ENCODE measurements at regions of chr10 and their contacts with region 1.

Region 1: GRCh38 chr10:68156373-68157185 is 47.3 kb downstream of the MYPN start:
- DNase-seq: peak; percentile 62 to 78
- H3K4me3 ChIP-seq: no peak overlapping the region
- H3K4me3 Mint-ChIP-seq: no peak overlapping the region
- H3K27ac Mint-ChIP-seq: no peak overlapping the region
- H3K4me1 ChIP-seq: peaks cover 10% of the 10 kb centered on the region
- H3K4me1 Mint-ChIP-seq: peaks cover 9% of the 10 kb centered on the region
- H3K27me3 ChIP-seq: no peaks in the 10 kb centered on the region
- H3K27me3 Mint-ChIP-seq: no peaks in the 10 kb centered on the region
- CTCF ChIP-seq: peak; percentile 91 to 94

Region 2: GRCh38 chr10:68074775-68075549 is 81.6 kb before region 1 on chr10 and contains the start of gene HERC4:
- CTCF ChIA-PET with region 1: interaction called, 5 read pairs
- POLR2A ChIA-PET with region 1: no interaction called
- intact Hi-C with region 1: loop called (anchors 2 kb)
- DNase-seq: peak; percentile 98
- H3K4me3 ChIP-seq: peak within 1 kb of the TSS; percentile 91
- H3K4me3 Mint-ChIP-seq: peak within 1 kb of the TSS; percentile 97
- H3K27ac Mint-ChIP-seq: peak within 1 kb of the TSS; percentile 94
- H3K4me1 ChIP-seq: peaks cover 18% of the 10 kb centered on the region
- H3K4me1 Mint-ChIP-seq: peaks cover 18% of the 10 kb centered on the region
- H3K27me3 ChIP-seq: no peaks in the 10 kb centered on the region
- H3K27me3 Mint-ChIP-seq: no peaks in the 10 kb centered on the region
- CTCF ChIP-seq: no peak
- total RNA-seq, gene HERC4: 59.4 and 65.2 TPM in 2 replicates

Region 3: GRCh38 chr10:68082872-68083271 is 73.7 kb before region 1 on chr10:
- CTCF ChIA-PET with region 1: interaction called, 20 read pairs
- POLR2A ChIA-PET with region 1: no interaction called
- intact Hi-C with region 1: loop called (anchors 1 kb)
- DNase-seq: peak in 1 of 2 experiments; percentile 26
- H3K4me3 ChIP-seq: no peak overlapping the region
- H3K4me3 Mint-ChIP-seq: no peak overlapping the region
- H3K27ac Mint-ChIP-seq: no peak overlapping the region
- H3K4me1 ChIP-seq: peaks cover 15% of the 10 kb centered on the region
- H3K4me1 Mint-ChIP-seq: peaks cover 19% of the 10 kb centered on the region
- H3K27me3 ChIP-seq: no peaks in the 10 kb centered on the region
- H3K27me3 Mint-ChIP-seq: peaks cover 3% of the 10 kb centered on the region
- CTCF ChIP-seq: peak; percentile 45 to 54

Region 4: DNA sequence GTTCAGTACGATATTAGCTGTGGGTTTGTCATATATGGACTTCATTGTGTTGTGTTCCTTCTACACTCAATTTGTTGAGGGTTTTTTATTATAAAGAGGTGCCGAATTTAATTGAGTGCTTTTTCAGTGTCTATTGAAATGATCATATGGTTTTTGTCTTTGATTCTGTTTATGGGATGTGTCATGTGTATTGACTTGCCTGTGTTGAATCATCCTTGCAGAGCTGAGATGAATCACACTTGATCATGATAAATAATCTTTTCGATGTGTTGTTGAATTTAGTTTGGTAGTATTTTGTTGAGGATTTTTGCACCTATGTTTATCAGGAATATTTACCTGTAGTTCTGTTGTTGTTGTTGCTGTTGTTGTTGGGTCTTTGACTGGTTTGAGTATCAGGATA is 35.5 kb after region 1 on chr10:
- CTCF ChIA-PET with region 1: no interaction called
- POLR2A ChIA-PET with region 1: no interaction called
- intact Hi-C with region 1: no loop called
- DNase-seq: no peak
- H3K4me3 ChIP-seq: no peak overlapping the region
- H3K4me3 Mint-ChIP-seq: no peak overlapping the region
- H3K27ac Mint-ChIP-seq: no peak overlapping the region
- H3K4me1 ChIP-seq: no peaks in the 10 kb centered on the region
- H3K4me1 Mint-ChIP-seq: no peaks in the 10 kb centered on the region
- H3K27me3 ChIP-seq: no peaks in the 10 kb centered on the region
- H3K27me3 Mint-ChIP-seq: peaks cover 32% of the 10 kb centered on the region
- CTCF ChIP-seq: no peak

Region 5: GRCh38 chr10:68271196-68271882 is 114.8 kb after region 1 on chr10:
- CTCF ChIA-PET with region 1: no interaction called
- POLR2A ChIA-PET with region 1: no interaction called
- intact Hi-C with region 1: no loop called
- DNase-seq: peak in 1 of 2 experiments; percentile 27
- H3K4me3 ChIP-seq: no peak overlapping the region
- H3K4me3 Mint-ChIP-seq: no peak overlapping the region
- H3K27ac Mint-ChIP-seq: no peak overlapping the region
- H3K4me1 ChIP-seq: no peaks in the 10 kb centered on the region
- H3K4me1 Mint-ChIP-seq: no peaks in the 10 kb centered on the region
- H3K27me3 ChIP-seq: no peaks in the 10 kb centered on the region; the same call in 1 of the 2 replicates
- H3K27me3 Mint-ChIP-seq: peaks cover 3% of the 10 kb centered on the region
- CTCF ChIP-seq: no peak